ENCODE measurements at regions of chr3 and their contacts with region 1.

Region 1: DNA sequence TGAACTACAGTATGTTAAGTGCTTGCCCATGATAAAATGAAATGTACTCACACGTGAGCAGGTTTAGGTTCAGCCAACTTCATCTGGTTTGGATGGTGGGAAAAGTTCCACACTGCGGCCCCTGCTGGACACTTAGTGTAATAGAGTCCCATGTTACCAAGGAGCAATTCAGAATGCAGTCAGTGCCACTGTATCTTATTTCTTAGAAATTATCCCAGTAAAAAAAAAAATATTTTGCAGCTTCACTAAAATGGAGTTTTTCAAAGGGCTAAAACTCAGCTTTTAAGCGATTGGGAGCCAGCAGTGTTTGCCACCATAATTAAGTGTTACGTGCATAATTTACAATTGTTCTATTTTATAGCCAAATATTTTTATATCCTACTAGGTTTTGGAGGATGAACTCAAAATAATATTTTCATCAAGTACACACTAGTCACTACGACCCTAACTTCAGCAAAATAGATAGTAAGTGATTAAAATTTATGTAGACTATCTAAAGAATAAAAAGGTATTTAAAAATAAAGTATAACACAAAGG is 371.7 kb upstream of the GBE1 start:
- DNase-seq: peak; percentile 58
- ATAC-seq: peak; percentile 78 to 79

Region 2: GRCh38 chr3:81302045-81302444 is 831.1 kb before region 1 on chr3:
- intact Hi-C with region 1: loop called in 1 of 2 experiments (anchors 10 kb)
- DNase-seq: peak; percentile 24
- ATAC-seq: peak in 1 of 2 donors; percentile 65

Region 3: DNA sequence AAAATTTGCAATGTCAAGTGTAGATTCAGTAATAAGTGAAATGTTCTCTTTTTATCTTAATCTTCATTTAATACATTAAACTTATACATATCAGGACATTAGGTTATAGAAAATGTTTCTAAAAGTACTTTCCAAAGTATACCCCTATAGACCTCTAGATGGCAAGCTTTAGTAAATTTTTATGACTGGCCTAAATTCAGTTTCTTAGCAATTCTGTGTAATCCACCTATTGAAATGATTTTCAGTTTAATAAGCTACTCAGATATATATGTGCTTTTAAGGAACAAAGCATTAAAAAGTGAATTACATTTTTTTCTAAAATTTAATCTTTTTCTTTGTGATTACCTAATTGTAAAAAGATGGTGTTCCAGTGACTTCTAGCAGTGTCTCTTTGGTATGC is 713.9 kb before region 1 on chr3:
- intact Hi-C with region 1: loop called in 1 of 2 experiments (anchors 5 kb)
- DNase-seq: no peak
- ATAC-seq: no peak

Region 4: GRCh38 chr3:81666493-81667121 is 466.5 kb before region 1 on chr3:
- intact Hi-C with region 1: loop called (anchors 2 to 10 kb)
- DNase-seq: no peak
- ATAC-seq: no peak

Region 5: DNA sequence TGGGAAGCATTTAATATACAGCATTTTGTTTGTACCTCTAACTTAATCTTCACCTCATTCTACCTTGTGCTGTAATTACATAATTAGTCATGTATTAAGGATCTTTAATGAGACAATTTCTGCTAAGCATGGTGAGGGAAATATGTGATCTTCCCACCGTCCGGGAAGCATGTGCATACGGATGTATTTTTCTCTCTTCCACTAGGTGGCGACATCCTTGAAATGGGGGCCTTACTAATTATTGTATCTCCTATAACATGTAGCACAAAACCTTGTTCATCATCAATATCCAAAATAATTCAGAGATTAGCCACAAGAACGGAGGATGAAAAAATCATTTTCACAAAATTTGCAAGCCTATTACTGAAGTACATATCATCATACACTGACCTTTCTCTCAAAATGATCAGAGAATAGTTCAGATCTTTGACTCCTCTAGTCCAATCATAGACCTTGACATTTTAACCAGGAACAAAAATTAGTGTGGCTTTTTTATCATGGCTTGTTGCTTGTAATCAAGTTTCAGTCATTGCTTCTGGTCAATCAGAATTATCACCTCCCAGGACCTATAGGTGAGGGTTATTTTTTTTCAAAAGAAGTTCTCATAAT is 222.8 kb before region 1 on chr3:
- intact Hi-C with region 1: loop called in 1 of 2 experiments (anchors 5 kb)
- DNase-seq: no peak
- ATAC-seq: peak; percentile 30 to 53

Region 6: GRCh38 chr3:82055792-82056191 is 77.3 kb before region 1 on chr3:
- intact Hi-C with region 1: no loop called
- DNase-seq: no peak
- ATAC-seq: no peak